Activated CD4-positive, alpha-beta T cell treated with anti-CD3 and anti-CD28 coated beads, Interleukin-2, amount 10 ng/mL, durations not matched to agents 24 days and 14 days (primary cell): ENCODE measurements at regions of chr13 and their contacts with region 1.

Region 1: GRCh38 chr13:48303359-48304142 is at the start of gene RB1:
- DNase-seq: peak; percentile 97
- H3K4me3 Mint-ChIP-seq: peak within 1 kb of the TSS; percentile 87
- H3K27ac Mint-ChIP-seq: peak within 1 kb of the TSS; percentile 98
- H3K4me1 Mint-ChIP-seq: peaks cover 21% of the 10 kb centered on the region
- H3K27me3 Mint-ChIP-seq: no peaks in the 10 kb centered on the region
- total RNA-seq, gene RB1: 27.3 and 29.0 TPM in 2 replicates

Region 2: DNA sequence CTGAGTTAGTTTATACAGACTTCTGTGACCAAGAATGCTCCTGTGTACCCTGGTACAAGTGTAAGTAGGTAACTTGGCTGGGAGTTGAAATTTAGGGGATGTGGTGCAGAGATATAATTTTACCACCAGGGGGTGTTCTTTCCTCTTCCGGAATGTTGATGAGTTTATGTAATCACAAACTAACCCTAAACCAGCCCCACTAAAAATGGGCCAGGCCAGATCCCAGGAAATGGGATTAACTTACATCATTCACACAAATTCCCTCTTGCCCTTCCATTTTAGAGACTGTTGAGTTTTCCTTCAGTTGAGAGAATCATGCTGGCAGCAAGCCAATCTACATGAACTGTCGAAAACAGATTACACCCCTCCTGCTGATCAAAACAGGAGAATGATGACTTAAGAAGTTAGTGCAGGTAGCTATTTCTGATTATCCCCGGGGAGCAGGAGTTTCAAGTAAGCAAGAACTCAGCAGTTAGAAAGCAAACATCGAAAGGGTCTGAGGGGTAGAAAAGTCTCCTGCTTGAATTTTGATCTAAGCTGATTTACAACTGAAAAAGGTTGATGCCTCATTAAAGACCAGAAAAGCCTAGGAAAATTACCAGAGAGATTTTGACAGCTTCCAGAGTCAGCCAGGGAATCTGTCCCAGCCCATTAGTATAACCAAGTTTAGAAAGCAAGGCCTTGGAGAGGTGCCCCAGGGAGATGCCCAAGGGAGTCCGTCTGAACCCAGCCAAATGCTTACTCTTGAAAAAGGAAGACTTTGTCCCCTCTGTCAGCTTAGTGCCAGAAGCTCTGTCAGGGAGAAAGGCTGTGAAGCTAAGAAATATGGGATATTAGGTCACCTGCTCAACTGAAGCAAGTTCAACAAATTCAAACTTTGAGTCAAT is 176.4 kb before region 1 on chr13:
- intact Hi-C with region 1: loop called (anchors 10 kb)
- DNase-seq: peak; percentile 81
- H3K4me3 Mint-ChIP-seq: no peak overlapping the region
- H3K27ac Mint-ChIP-seq: no peak overlapping the region
- H3K4me1 Mint-ChIP-seq: peaks cover 18% of the 10 kb centered on the region
- H3K27me3 Mint-ChIP-seq: peaks cover 13% of the 10 kb centered on the region

Region 3: DNA sequence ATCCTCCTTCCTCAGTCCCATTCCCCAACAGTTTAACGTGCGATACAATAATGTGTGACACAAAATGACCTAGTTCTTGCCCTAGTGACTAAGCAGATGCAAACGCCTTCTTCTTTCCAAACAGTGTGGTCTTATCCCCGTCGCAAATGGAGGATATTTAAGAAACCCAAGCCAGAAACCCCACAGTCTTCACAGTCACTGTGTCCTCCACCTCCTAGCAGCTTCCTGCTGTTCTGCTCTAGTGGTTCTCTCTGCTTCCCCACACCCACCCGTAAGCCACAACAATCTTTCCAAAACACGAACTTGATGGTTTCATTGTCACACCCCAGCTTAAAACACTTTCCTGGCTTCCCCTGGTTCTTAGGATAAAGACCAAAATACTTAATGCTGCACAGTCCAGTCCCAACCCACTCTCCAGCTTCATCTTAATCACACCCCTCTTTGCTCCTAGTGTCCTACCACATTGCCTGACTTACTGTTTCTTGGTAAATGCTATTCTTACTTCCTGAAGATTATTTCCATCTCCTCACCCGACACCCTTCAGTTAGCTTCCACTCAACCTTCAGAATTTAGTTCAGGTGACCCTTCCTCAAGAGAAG is 38.2 kb before region 1 on chr13:
- intact Hi-C with region 1: loop called (anchors 1 kb)
- DNase-seq: peak; percentile 73
- H3K4me3 Mint-ChIP-seq: peak overlapping the region; percentile 49
- H3K27ac Mint-ChIP-seq: peak overlapping the region; percentile 37
- H3K4me1 Mint-ChIP-seq: peaks cover 16% of the 10 kb centered on the region
- H3K27me3 Mint-ChIP-seq: no peaks in the 10 kb centered on the region

Region 4: GRCh38 chr13:48532506-48533499 is 229.3 kb after region 1 on chr13 and contains the start of gene RCBTB2:
- intact Hi-C with region 1: loop called (anchors 1 kb)
- DNase-seq: peak; percentile 100
- H3K4me3 Mint-ChIP-seq: peak within 1 kb of the TSS; percentile 87
- H3K27ac Mint-ChIP-seq: peak within 1 kb of the TSS; percentile 96
- H3K4me1 Mint-ChIP-seq: peaks cover 26% of the 10 kb centered on the region
- H3K27me3 Mint-ChIP-seq: peaks cover 15% of the 10 kb centered on the region
- total RNA-seq, gene RCBTB2: 1.6 and 1.7 TPM in 2 replicates

Region 5: DNA sequence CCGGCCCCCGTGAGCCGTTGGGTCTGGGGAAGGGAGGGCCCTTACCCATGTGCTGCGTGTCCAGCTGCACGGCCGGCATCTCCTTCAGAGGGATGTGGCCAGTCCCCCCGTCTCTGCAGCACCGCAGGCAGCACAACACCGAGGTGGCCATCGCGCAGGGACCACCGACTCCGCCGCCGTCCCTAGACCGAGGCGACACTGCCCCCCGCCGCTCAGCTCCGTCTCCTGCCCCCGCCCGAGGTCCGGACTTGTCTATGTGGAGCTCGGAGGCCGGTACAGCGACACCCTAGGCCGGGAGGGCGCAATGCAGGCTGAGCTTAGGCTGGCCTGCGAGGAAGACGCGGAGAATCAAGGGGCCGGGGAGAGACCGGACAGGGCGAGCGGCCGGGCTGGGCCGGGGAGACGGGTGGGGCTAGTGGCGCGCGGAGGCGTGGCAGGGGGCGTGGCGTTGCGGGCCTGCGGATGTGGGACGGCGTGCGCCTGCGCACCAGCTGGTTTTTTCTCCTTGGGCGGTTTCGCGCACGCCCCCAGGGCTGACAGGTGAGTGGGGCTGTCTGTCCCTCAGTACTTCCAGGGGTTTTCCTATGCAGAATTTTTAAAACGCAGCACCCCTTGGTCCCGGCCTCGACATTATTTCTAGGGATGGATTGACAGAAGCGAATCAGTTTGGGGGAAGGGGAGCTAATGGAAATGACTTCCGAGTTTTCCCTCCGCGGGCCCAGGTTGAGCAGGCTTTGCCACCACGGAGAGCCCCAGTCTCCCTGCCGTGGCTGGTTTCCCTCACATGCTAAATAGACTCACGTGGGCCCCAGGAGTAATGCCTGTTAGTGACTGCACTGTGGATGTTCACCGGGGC is 1632.8 kb after region 1 on chr13 and contains the start of gene SPRYD7:
- intact Hi-C with region 1: loop called (anchors 10 kb)
- DNase-seq: peak; percentile 99
- H3K4me3 Mint-ChIP-seq: peak within 1 kb of the TSS; percentile 94
- H3K27ac Mint-ChIP-seq: peak within 1 kb of the TSS; percentile 83
- H3K4me1 Mint-ChIP-seq: peaks cover 13% of the 10 kb centered on the region
- H3K27me3 Mint-ChIP-seq: peaks cover 17% of the 10 kb centered on the region
- total RNA-seq, gene SPRYD7: 6.9 and 8.1 TPM in 2 replicates